Ascending aorta (tissue), 2 donors: ENCODE measurements at regions of chr2 and their contacts with region 1.

Region 1: DNA sequence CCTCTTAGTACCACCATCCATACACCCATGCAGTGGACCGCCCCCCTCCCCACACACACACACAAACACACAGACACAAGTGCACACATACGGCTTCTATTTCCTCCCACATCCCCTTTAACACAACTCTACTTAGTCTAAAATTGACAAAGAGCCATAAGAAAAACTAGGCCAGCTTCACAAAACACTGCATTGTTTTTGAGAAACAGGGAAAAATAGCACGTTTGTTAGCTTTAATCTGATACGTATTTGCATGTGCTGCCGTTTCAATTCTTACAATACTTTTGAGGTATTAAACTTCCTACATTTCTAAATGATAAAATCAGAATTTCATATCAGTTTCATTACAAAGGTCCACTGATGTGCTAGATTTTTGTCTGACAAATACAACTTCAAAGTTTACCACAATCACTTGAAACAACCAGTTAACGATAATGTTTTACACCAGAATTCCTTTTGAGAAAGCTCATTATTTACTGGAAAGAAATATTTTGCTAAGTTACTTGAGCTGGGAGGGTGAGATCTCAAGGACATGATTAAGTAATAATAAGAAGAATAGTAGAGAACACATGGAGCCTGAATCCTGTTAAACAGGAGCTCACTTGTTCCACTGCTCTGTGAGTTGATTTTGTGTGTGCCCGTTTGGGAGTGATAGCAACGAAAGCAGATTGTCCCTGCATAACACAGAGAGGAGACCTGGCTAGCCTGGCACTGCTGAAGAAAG is 74.5 kb downstream of the MOGAT1 start:
- DNase-seq: no peak
- H3K4me3 ChIP-seq: no peak overlapping the region
- H3K27ac ChIP-seq: peak overlapping the region; percentile 29 to 74
- H3K4me1 ChIP-seq: peaks cover 0 to 15% of the 10 kb centered on the region in 2 donors
- H3K27me3 ChIP-seq: no peaks in the 10 kb centered on the region
- CTCF ChIP-seq: no peak

Region 2: GRCh38 chr2:222714361-222715241 is 31.4 kb before region 1 on chr2:
- intact Hi-C with region 1: loop called (anchors 2 kb)
- DNase-seq: peak; percentile 24 to 77
- H3K4me3 ChIP-seq: peak overlapping the region in 1 of 2 donors; percentile 16
- H3K27ac ChIP-seq: peak overlapping the region; percentile 78 to 91
- H3K4me1 ChIP-seq: peaks cover 3 to 29% of the 10 kb centered on the region in 2 donors
- H3K27me3 ChIP-seq: no peaks in the 10 kb centered on the region
- CTCF ChIP-seq: no peak

Region 3: DNA sequence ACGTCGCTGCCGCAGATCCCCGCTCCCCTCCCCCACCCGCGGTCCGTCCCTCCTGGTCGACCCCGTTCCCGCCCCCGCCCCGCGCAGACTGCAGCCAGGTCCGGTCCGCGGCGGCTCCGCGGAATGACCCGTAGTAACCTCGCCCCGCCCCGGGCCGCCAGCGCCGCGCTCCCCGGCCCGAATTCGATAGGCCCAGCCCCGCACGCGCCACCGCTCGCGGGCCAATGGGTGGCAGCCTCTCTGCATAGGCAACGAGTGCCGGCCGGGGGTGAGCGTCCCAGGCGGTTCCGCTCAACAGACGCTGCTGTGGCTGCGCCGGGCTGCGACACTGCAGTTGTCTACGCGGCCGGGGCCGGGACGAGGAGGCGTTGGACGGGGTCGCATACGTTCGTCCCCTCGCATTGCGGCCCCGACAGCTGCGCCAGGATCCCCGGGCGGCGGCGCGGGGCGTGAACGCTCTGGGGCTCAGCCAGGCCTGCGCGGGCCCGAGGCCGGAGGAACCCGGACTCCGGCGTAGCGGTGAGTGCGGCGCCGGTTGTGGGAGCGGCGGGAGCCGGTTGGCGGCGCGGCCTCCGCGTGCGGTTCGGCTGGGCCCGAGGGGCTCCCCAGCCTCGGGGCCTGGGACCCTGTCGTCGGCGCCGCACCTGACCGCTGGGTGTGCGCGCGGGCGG is 114.9 kb after region 1 on chr2 and contains the start of gene ACSL3:
- intact Hi-C with region 1: no loop called
- DNase-seq: peak; percentile 90 to 98
- H3K4me3 ChIP-seq: peak within 1 kb of the TSS; percentile 83 to 99
- H3K27ac ChIP-seq: peak within 1 kb of the TSS; percentile 94 to 96
- H3K4me1 ChIP-seq: peaks cover 0 to 29% of the 10 kb centered on the region in 2 donors
- H3K27me3 ChIP-seq: no peaks in the 10 kb centered on the region
- CTCF ChIP-seq: peak in 2 of 3 experiments; percentile 19 to 54
- total RNA-seq, gene ACSL3: 48.9 TPM

Region 4: GRCh38 chr2:222930862-222931261 is 184.9 kb after region 1 on chr2:
- intact Hi-C with region 1: no loop called
- DNase-seq: no peak
- H3K4me3 ChIP-seq: no peak overlapping the region
- H3K27ac ChIP-seq: no peak overlapping the region
- H3K4me1 ChIP-seq: no peaks in the 10 kb centered on the region
- H3K27me3 ChIP-seq: no peaks in the 10 kb centered on the region
- CTCF ChIP-seq: no peak